CD14-positive monocyte (primary cell): ENCODE measurements at regions of chr11 and their contacts with region 1.

Region 1: GRCh38 chr11:66694732-66695207 is 17.1 kb upstream of the RBM4B start:
- DNase-seq: peak; percentile 80 to 91 (median 81)
- H3K4me3 ChIP-seq: no peak overlapping the region
- H3K4me3 Mint-ChIP-seq: no peak overlapping the region
- H3K27ac ChIP-seq: no peak overlapping the region
- H3K27ac Mint-ChIP-seq: peak overlapping the region in 2 of 7 donors; percentile 33 to 57
- H3K4me1 ChIP-seq: no peaks in the 10 kb centered on the region
- H3K4me1 Mint-ChIP-seq: peaks cover 2% of the 10 kb centered on the region
- H3K27me3 ChIP-seq: no peaks in the 10 kb centered on the region
- H3K27me3 Mint-ChIP-seq: peaks cover 0 to 9% (median 4%) of the 10 kb centered on the region in 3 donors
- CTCF ChIP-seq: peak; percentile 95

Region 2: DNA sequence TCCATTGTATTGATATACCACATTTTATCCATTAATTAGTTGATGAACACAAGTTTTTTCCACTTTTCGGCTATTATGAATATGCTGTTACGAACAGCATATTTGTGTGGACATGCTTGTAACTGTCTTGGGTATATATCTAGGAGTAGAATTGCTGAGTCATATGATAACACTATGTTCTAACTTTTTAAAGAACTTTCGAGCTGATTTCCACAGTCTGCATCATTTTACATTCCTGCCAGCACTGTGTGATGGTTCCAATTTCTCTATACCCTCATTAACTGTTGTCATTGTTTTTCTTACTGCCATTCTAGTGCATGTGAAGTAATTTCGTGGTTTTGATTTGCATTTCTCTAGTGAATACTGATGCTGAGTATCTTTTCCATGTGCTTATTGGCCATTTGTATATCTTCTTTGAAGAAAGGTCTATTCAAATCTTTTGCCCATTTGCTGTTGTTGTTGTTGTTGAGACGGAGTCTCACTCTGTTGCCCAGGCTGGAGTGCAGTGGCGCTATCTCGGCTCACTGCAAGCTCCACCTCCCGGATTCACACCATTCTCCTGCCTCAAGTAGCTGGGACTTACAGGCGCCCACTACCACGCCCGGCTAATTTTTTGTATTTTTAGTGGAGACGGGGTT is 141.1 kb after region 1 on chr11:
- intact Hi-C with region 1: loop called (anchors 1 to 2 kb)
- DNase-seq: no peak
- H3K4me3 ChIP-seq: no peak overlapping the region
- H3K4me3 Mint-ChIP-seq: no peak overlapping the region
- H3K27ac ChIP-seq: no peak overlapping the region
- H3K27ac Mint-ChIP-seq: peak overlapping the region in 2 of 7 donors; percentile 30 to 66
- H3K4me1 ChIP-seq: no peaks in the 10 kb centered on the region
- H3K4me1 Mint-ChIP-seq: peaks cover 14% of the 10 kb centered on the region
- H3K27me3 ChIP-seq: no peaks in the 10 kb centered on the region
- H3K27me3 Mint-ChIP-seq: peaks cover 0 to 4% (median 0%) of the 10 kb centered on the region in 3 donors
- CTCF ChIP-seq: no peak

Region 3: GRCh38 chr11:66883016-66883968 is 188.5 kb after region 1 on chr11:
- intact Hi-C with region 1: loop called in 1 of 2 experiments (anchors 5 kb)
- DNase-seq: peak; percentile 29 to 49 (median 49)
- H3K4me3 ChIP-seq: no peak overlapping the region
- H3K4me3 Mint-ChIP-seq: no peak overlapping the region
- H3K27ac ChIP-seq: no peak overlapping the region
- H3K27ac Mint-ChIP-seq: peak overlapping the region in 3 of 7 donors; percentile 46 to 75 (median 68)
- H3K4me1 ChIP-seq: peaks cover 0 to 5% of the 10 kb centered on the region in 2 donors
- H3K4me1 Mint-ChIP-seq: peaks cover 14% of the 10 kb centered on the region
- H3K27me3 ChIP-seq: no peaks in the 10 kb centered on the region
- H3K27me3 Mint-ChIP-seq: peaks cover 3 to 6% (median 6%) of the 10 kb centered on the region in 3 donors
- CTCF ChIP-seq: peak; percentile 78

Region 4: DNA sequence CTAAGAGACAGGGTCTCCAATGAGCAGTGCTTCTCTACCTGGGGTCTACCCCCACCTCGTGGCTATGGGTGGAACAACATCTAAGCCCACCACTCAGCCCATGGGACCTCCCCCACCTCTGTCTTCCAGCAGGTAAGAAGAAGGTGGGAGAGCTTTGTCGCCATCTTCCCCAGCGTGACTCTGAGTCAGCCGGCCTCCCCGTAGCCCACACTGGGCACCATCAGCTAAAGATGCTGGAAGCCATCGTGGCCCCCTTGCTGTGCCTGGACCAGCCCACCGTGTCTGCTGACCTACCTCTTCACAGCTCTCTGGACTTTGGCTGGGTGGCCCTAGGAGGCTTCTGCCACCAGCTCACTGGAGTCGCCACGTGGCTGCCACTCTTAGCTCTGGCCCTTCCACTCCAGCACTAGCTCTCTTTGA is 281.3 kb after region 1 on chr11:
- intact Hi-C with region 1: loop called in 1 of 2 experiments (anchors 10 kb)
- DNase-seq: peak in 1 of 3 donors; percentile 28
- H3K4me3 ChIP-seq: no peak overlapping the region
- H3K4me3 Mint-ChIP-seq: no peak overlapping the region
- H3K27ac ChIP-seq: no peak overlapping the region
- H3K27ac Mint-ChIP-seq: peak overlapping the region in 1 of 7 donors; percentile 22
- H3K4me1 ChIP-seq: peaks cover 11 to 14% of the 10 kb centered on the region in 2 donors
- H3K4me1 Mint-ChIP-seq: peaks cover 11% of the 10 kb centered on the region
- H3K27me3 ChIP-seq: no peaks in the 10 kb centered on the region
- H3K27me3 Mint-ChIP-seq: peaks cover 8 to 22% (median 10%) of the 10 kb centered on the region in 3 donors
- CTCF ChIP-seq: peak; percentile 87